ENCODE measurements at regions of chr5 and their contacts with region 1.

Region 1: GRCh38 chr5:55159763-55160492 is at the start of gene GPX8:
- DNase-seq: no peak
- H3K4me3 ChIP-seq: peak within 1 kb of the TSS; percentile 13 to 63 (median 42)
- H3K27ac ChIP-seq: peak within 1 kb of the TSS; percentile 12 to 80 (median 70)
- H3K4me1 ChIP-seq: peaks cover 0 to 24% (median 0%) of the 10 kb centered on the region in 3 donors
- H3K27me3 ChIP-seq: peaks cover 0 to 34% (median 0%) of the 10 kb centered on the region in 4 donors
- CTCF ChIP-seq: peak; percentile 24 to 66 (median 56)
- POLR2A ChIP-seq: no peak
- total RNA-seq, gene GPX8: 0.45 to 8.7 (median 7.3) TPM

Region 2: DNA sequence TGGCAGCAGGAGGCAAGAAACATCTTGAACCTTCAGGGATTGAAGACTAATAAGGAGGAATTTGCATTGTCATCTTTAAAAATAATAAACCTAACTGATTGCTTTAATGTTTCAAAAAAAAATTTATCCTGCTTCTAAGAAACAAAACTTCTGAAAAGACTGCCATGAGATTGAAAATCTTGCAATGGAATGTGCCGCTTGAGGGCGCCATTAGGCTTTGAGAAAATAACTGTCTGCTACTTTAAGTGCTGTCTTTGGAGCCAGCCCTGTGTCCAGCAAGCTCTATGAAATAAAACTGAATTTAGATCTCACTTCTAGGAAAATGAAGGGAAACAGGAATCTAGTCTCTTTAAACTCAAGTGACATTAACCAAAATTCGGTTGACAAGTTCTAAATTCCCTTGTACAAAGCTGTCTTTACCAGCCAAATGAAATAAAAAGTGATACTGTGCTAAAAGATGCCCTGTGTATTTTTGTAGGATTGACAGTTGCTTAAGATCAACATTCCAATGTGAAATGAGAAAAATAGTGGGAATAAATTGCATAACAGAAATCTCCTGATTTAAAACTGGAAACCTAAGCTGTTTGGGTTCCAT is 253.9 kb before region 1 on chr5:
- intact Hi-C with region 1: loop called (anchors 10 kb)
- DNase-seq: no peak
- H3K4me3 ChIP-seq: no peak overlapping the region
- H3K27ac ChIP-seq: no peak overlapping the region
- H3K4me1 ChIP-seq: peaks cover 0 to 11% (median 0%) of the 10 kb centered on the region in 3 donors
- H3K27me3 ChIP-seq: peaks cover 0 to 43% (median 0%) of the 10 kb centered on the region in 4 donors
- CTCF ChIP-seq: peak in 5 of 6 experiments; percentile 32 to 68 (median 51)
- POLR2A ChIP-seq: no peak

Region 3: GRCh38 chr5:55037046-55037771 is 122.7 kb before region 1 on chr5:
- intact Hi-C with region 1: no loop called
- DNase-seq: no peak
- H3K4me3 ChIP-seq: no peak overlapping the region
- H3K27ac ChIP-seq: no peak overlapping the region
- H3K4me1 ChIP-seq: no peaks in the 10 kb centered on the region
- H3K27me3 ChIP-seq: no peaks in the 10 kb centered on the region
- CTCF ChIP-seq: no peak
- POLR2A ChIP-seq: no peak

Measured in esophagus squamous epithelium (tissue), 5 donors.